HCT116 (cell line): ENCODE measurements at regions of chr2 and their contacts with region 1.

Region 1: GRCh38 chr2:135985018-135985825 is at the start of gene DARS1:
- DNase-seq: peak; percentile 82
- ATAC-seq: peak; percentile 95
- H3K4me3 ChIP-seq: peak within 1 kb of the TSS; percentile 66 to 76
- H3K27ac ChIP-seq: peak within 1 kb of the TSS; percentile 95
- H3K4me1 ChIP-seq: peaks cover 0 to 14% of the 10 kb centered on the region in 2 experiments; a peak in 3 of 4 replicates
- H3K27me3 ChIP-seq: no peaks in the 10 kb centered on the region
- CTCF ChIP-seq: no peak
- POLR2A ChIP-seq: peak; percentile 32
- RAD21 ChIP-seq: no peak
- total RNA-seq, gene DARS1: 94.8 TPM

Region 2: GRCh38 chr2:135948642-135949355 is 36.4 kb before region 1 on chr2:
- CTCF ChIA-PET with region 1: no interaction called
- POLR2A ChIA-PET with region 1: no interaction called
- RAD21 ChIA-PET with region 1: no interaction called
- intact Hi-C with region 1: loop called (anchors 1 kb)
- DNase-seq: peak; percentile 83
- ATAC-seq: peak; percentile 92
- H3K4me3 ChIP-seq: peak overlapping the region; percentile 20 to 49
- H3K27ac ChIP-seq: peak overlapping the region; percentile 97
- H3K4me1 ChIP-seq: peaks cover 49 to 51% of the 10 kb centered on the region in 2 experiments
- H3K27me3 ChIP-seq: no peaks in the 10 kb centered on the region
- CTCF ChIP-seq: no peak
- POLR2A ChIP-seq: no peak
- RAD21 ChIP-seq: no peak